AG04449 (cell line): ENCODE measurements at regions of chr1 and their contacts with region 1.

Region 1: GRCh38 chr1:31762726-31763670 is 1.1 kb downstream of the ADGRB2 start:
- DNase-seq: no peak
- H3K4me3 ChIP-seq: peak overlapping the region; percentile 70
- CTCF ChIP-seq: peak; percentile 82

Region 2: GRCh38 chr1:31775210-31775999 is 12.4 kb after region 1 on chr1:
- CTCF ChIA-PET with region 1: interaction called, 10 read pairs
- POLR2A ChIA-PET with region 1: interaction called, 3 read pairs
- DNase-seq: no peak
- H3K4me3 ChIP-seq: no peak overlapping the region
- CTCF ChIP-seq: no peak

Region 3: DNA sequence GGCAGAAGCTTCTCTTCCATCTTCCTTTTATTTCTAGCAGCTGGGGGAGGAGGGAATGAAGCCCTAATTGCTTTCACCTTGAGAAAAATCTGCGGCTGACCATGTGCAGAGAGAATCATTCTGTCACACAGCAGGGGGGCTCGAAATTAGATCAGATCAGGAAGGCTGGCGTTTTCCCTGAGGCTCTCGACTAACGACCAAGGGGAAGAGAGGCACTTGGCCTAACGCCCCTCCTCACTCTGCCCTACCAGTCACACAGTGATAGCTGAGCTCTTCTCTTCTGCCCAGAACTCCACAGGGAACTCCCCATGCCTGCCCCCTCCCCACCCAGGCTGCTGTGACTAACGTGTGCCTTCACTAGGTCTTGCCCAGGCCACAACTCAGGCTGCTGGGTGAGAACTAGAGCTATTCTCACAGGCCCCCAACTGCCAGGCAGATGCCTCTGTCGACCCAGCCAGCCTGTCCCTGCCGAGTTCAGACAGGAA is 224.2 kb after region 1 on chr1:
- CTCF ChIA-PET with region 1: no interaction called
- POLR2A ChIA-PET with region 1: no interaction called
- DNase-seq: no peak
- H3K4me3 ChIP-seq: no peak overlapping the region
- CTCF ChIP-seq: no peak